ENCODE measurements at regions of chr19 and their contacts with region 1.

Region 1: DNA sequence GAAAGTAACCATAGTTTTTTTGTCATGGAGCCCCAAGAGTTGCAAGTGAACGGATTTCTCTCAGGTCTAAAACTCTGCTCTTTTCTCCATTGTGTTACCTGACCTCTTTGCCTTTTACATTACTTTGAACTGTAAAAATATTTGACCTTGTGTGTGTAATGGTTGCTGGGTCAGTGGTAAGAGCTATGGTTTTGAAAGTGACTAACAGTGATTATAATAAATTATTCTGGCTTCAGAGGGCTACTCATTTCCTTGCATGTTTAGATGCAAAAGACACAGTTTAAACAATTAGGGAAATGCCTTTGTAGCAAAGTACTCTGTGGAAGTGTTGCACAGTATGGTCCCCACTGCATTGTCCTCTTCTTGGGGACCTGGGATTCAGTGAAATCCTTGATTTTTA is 29.3 kb upstream of the PSG8 start:
- DNase-seq: no peak
- H3K4me3 Mint-ChIP-seq: no peak overlapping the region
- H3K27ac Mint-ChIP-seq: no peak overlapping the region
- H3K4me1 Mint-ChIP-seq: peaks cover 15% of the 10 kb centered on the region
- H3K27me3 Mint-ChIP-seq: no peaks in the 10 kb centered on the region
- CTCF ChIP-seq: no peak

Region 2: DNA sequence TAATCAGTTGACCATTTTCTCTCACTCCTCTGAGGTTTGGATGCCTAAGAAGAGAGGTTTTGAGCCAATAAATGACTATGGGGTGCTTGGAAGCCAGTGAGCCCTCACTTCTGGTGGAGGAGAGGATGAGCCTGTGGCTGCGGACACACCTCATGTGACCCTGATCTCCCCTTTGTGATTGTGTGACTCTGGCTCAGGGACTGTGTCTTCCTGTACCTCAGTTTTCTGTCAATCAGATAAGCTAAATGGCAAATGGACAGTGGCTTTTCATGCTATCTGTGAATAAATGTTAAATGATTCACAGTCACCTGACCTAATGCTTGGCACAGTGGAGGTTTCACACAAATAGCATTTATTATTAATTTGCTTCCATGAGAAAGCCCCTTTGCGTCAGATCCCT is 32.0 kb before region 1 on chr19:
- CTCF ChIA-PET with region 1: no interaction called
- POLR2A ChIA-PET with region 1: no interaction called
- intact Hi-C with region 1: no loop called
- DNase-seq: no peak
- H3K4me3 Mint-ChIP-seq: no peak overlapping the region
- H3K27ac Mint-ChIP-seq: no peak overlapping the region
- H3K4me1 Mint-ChIP-seq: peaks cover 28% of the 10 kb centered on the region
- H3K27me3 Mint-ChIP-seq: no peaks in the 10 kb centered on the region
- CTCF ChIP-seq: no peak

Region 3: DNA sequence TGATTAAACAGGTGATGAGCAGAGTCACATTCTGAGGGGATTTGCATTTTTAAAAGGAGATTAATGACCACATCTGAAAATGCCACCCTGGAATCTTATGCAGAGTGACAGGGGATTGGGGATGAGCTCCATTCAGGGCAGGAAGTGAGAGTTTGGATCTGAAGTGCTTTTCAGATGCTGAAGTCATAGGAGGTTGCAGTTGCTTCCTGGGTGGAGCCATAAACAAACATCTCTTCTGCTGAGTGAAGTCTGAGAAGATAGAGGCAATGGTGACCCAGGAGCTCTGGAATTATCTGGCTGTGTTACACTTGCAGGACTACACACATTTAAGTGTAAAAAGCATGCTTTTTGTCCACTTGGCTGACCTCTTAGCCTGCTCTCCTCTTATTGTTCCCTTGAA is 22.1 kb after region 1 on chr19:
- CTCF ChIA-PET with region 1: no interaction called
- POLR2A ChIA-PET with region 1: no interaction called
- intact Hi-C with region 1: no loop called
- DNase-seq: no peak
- H3K4me3 Mint-ChIP-seq: no peak overlapping the region
- H3K27ac Mint-ChIP-seq: no peak overlapping the region
- H3K4me1 Mint-ChIP-seq: peaks cover 14% of the 10 kb centered on the region
- H3K27me3 Mint-ChIP-seq: no peaks in the 10 kb centered on the region
- CTCF ChIP-seq: no peak

Region 4: DNA sequence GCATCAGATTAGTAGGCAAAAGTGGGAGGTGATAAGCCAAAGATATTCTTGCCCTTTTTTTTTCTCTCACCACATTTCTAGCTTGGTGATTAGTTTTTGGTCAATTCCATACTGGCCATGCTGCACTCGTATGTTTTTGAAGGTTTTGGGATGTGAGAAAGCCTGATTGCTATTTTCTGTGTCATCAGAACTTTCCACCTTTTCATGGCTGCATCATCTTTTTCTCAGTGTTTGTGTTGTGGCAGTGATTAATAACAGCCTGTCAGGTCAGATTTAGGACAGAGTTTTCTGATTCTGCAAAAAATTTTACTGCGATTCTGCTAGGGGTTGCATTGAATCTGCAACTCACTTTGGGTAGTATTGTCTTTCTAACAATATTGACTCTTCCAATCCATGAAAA is 51.8 kb after region 1 on chr19:
- CTCF ChIA-PET with region 1: no interaction called
- POLR2A ChIA-PET with region 1: no interaction called
- intact Hi-C with region 1: no loop called
- DNase-seq: no peak
- H3K4me3 Mint-ChIP-seq: no peak overlapping the region
- H3K27ac Mint-ChIP-seq: no peak overlapping the region
- H3K4me1 Mint-ChIP-seq: peaks cover 21% of the 10 kb centered on the region
- H3K27me3 Mint-ChIP-seq: no peaks in the 10 kb centered on the region
- CTCF ChIP-seq: no peak

Region 5: GRCh38 chr19:42857561-42857901 is 62.8 kb after region 1 on chr19:
- CTCF ChIA-PET with region 1: interaction called, 6 read pairs
- POLR2A ChIA-PET with region 1: no interaction called
- intact Hi-C with region 1: loop called (anchors 1 kb)
- DNase-seq: no peak
- H3K4me3 Mint-ChIP-seq: no peak overlapping the region
- H3K27ac Mint-ChIP-seq: peak overlapping the region; percentile 39
- H3K4me1 Mint-ChIP-seq: peaks cover 21% of the 10 kb centered on the region
- H3K27me3 Mint-ChIP-seq: no peaks in the 10 kb centered on the region
- CTCF ChIP-seq: no peak

Region 6: GRCh38 chr19:42881229-42881628 is 86.5 kb after region 1 on chr19:
- CTCF ChIA-PET with region 1: interaction called, 54 read pairs
- POLR2A ChIA-PET with region 1: no interaction called
- intact Hi-C with region 1: loop called (anchors 1 kb)
- DNase-seq: no peak
- H3K4me3 Mint-ChIP-seq: no peak overlapping the region
- H3K27ac Mint-ChIP-seq: no peak overlapping the region
- H3K4me1 Mint-ChIP-seq: peaks cover 4% of the 10 kb centered on the region
- H3K27me3 Mint-ChIP-seq: no peaks in the 10 kb centered on the region
- CTCF ChIP-seq: peak; percentile 60

Region 7: DNA sequence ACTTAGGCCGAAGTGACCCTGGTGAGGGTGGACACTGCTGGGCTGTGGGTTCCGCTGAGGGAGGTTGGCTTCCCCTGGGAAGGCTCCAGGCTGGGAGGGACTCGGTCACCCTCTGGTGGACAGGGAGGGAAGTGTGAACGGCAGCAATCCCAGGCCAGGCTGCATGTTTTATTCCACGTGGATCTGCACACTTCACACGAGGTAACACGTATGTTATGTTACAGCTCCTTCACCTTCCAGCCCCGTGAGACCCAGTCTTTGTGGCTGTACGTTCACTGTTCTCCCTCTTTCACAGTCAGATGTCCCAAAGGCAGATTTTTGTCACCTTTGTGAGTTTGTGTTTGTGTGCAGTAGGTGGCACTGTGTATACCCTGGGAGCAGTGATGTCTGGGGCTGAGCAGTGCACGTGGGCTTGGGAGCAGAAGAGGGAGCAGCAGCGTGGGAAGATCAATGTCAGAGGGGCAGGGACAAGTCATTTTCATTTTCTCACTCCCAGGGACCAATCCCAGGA is 124.8 kb after region 1 on chr19:
- CTCF ChIA-PET with region 1: interaction called, 39 read pairs
- POLR2A ChIA-PET with region 1: no interaction called
- intact Hi-C with region 1: loop called (anchors 1 kb)
- DNase-seq: no peak
- H3K4me3 Mint-ChIP-seq: no peak overlapping the region
- H3K27ac Mint-ChIP-seq: no peak overlapping the region
- H3K4me1 Mint-ChIP-seq: no peaks in the 10 kb centered on the region
- H3K27me3 Mint-ChIP-seq: no peaks in the 10 kb centered on the region
- CTCF ChIP-seq: peak; percentile 23

Region 8: GRCh38 chr19:43028861-43029260 is 234.1 kb after region 1 on chr19:
- CTCF ChIA-PET with region 1: no interaction called
- POLR2A ChIA-PET with region 1: no interaction called
- intact Hi-C with region 1: loop called (anchors 5 kb)
- DNase-seq: no peak
- H3K4me3 Mint-ChIP-seq: no peak overlapping the region
- H3K27ac Mint-ChIP-seq: no peak overlapping the region
- H3K4me1 Mint-ChIP-seq: no peaks in the 10 kb centered on the region
- H3K27me3 Mint-ChIP-seq: no peaks in the 10 kb centered on the region
- CTCF ChIP-seq: no peak

Region 9: GRCh38 chr19:43080186-43080585 is 285.4 kb after region 1 on chr19:
- CTCF ChIA-PET with region 1: interaction called, 3 read pairs
- POLR2A ChIA-PET with region 1: no interaction called
- intact Hi-C with region 1: loop called (anchors 5 kb)
- DNase-seq: no peak
- H3K4me3 Mint-ChIP-seq: no peak overlapping the region
- H3K27ac Mint-ChIP-seq: no peak overlapping the region
- H3K4me1 Mint-ChIP-seq: peaks cover 10% of the 10 kb centered on the region
- H3K27me3 Mint-ChIP-seq: no peaks in the 10 kb centered on the region
- CTCF ChIP-seq: no peak

Region 10: GRCh38 chr19:43105496-43105895 is 310.7 kb after region 1 on chr19:
- CTCF ChIA-PET with region 1: no interaction called
- POLR2A ChIA-PET with region 1: no interaction called
- intact Hi-C with region 1: no loop called
- DNase-seq: no peak
- H3K4me3 Mint-ChIP-seq: no peak overlapping the region
- H3K27ac Mint-ChIP-seq: no peak overlapping the region
- H3K4me1 Mint-ChIP-seq: peaks cover 12% of the 10 kb centered on the region
- H3K27me3 Mint-ChIP-seq: no peaks in the 10 kb centered on the region
- CTCF ChIP-seq: no peak

Region 11: DNA sequence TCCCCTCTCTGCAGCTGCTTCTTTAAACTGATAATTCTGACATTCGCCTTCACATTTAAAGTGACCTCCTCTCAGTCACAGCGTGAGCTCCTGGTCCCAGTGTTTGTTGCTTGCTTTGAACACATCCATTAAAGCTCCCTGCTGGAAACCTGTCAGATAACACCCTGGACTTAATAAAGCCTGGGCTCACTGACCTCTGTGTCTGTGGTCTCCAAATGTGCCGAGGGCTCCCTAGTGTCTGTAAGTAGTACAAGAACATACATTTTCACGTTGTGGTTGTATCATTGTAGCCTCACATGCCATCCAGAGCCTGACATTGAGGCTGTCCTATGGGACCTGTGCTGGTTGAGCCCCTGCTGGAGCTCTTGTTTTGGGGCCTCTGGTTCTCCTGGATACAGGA is 413.2 kb after region 1 on chr19:
- CTCF ChIA-PET with region 1: no interaction called
- POLR2A ChIA-PET with region 1: no interaction called
- intact Hi-C with region 1: loop called (anchors 10 kb)
- DNase-seq: no peak
- H3K4me3 Mint-ChIP-seq: no peak overlapping the region
- H3K27ac Mint-ChIP-seq: no peak overlapping the region
- H3K4me1 Mint-ChIP-seq: peaks cover 3% of the 10 kb centered on the region
- H3K27me3 Mint-ChIP-seq: no peaks in the 10 kb centered on the region
- CTCF ChIP-seq: no peak